Gastrocnemius medialis (tissue), 4 donors: ENCODE measurements at regions of chr2 and their contacts with region 1.

Region 1: GRCh38 chr2:190534310-190535120 is at the start of gene NEMP2:
- DNase-seq: peak; percentile 55 to 74
- ATAC-seq: peak; percentile 91
- H3K4me3 ChIP-seq: peak within 1 kb of the TSS; percentile 59 to 81 (median 68)
- H3K27ac ChIP-seq: peak within 1 kb of the TSS; percentile 85 to 95 (median 87)
- H3K4me1 ChIP-seq: peaks cover 11 to 13% of the 10 kb centered on the region in 2 donors
- H3K27me3 ChIP-seq: no peaks in the 10 kb centered on the region
- CTCF ChIP-seq: no peak
- POLR2A ChIP-seq: peak; percentile 57 to 74
- total RNA-seq, gene NEMP2: 0.24 to 1.7 (median 1.3) TPM

Region 2: DNA sequence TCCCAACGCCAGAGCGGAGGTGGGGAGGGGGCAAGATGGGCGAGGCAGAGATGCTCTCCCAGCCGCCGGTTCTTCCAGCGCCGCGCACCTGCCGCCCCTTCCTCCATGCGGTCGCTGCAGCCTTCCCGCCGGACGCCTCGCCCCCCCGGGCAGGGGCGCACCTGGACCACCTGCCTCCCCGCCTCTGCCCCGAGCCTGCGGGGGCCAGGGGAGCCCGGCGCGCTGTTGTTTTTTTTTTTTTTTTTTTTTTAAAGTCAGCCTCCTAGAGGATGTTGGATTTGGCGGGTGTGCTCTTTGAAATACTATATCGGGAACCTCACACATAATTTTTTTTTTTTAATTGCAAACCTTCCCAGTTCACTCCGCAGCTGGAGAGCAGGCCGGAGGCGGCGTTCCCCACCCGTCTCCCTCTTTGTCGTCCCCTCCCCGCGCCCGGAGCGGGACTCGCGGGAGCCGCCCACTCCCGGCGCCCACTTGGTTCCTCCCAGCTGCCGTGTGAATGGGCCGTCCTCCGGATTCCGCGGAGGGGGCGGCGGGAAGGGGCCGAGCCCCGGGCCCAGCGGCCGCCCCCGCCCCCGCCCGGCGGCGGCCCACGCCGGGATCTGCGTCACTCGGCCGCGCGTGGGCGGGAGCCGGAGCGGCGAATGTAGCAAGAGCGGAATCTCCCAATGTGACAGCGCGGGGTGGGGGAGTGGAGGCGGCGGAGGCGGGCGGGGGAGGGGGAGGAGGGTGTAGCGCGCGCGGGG is 113.9 kb after region 1 on chr2:
- in situ Hi-C with region 1: loop called in 1 of 4 experiments (anchors 25 kb)
- intact Hi-C with region 1: loop called (anchors 2 kb)
- DNase-seq: peak; percentile 70 to 76
- ATAC-seq: peak; percentile 78 to 80
- H3K4me3 ChIP-seq: peak overlapping the region; percentile 69 to 87 (median 82)
- H3K27ac ChIP-seq: peak overlapping the region; percentile 73 to 87 (median 82)
- H3K4me1 ChIP-seq: peaks cover 20 to 28% of the 10 kb centered on the region in 2 donors
- H3K27me3 ChIP-seq: no peaks in the 10 kb centered on the region
- CTCF ChIP-seq: no peak
- POLR2A ChIP-seq: peak; percentile 58 to 66